ENCODE measurements at regions of chr19 and their contacts with region 1.

Region 1: DNA sequence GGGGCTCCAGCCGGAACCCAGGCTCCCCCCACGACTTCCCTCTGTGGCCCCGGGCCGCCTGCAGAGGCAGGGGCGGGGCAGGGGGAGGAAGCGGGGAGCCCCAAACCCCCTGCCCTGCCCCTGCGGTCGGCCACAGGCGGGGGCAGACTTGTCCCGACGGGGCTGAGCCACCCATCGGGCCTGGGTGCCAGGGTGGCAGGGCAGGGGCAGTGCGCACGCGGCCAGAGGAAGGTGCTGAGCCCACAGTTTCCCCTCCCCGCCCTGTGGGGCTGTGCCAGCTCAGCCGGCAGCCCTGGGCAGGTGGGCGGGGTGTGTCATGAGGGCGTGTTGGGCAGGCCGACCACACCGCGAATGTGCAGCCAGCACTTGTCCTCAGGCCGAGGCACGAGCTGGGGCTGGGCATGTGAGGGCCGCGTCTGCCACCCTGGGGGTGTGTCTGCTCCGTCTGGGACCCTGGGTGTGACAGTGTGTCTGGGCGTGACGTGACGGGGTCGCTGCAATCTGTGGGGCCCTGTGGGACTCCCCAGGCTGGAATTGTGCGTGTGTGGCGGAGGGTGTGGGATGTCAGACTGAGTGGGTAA is 17.7 kb downstream of the CCDC97 start:
- DNase-seq: peak; percentile 98
- H3K4me3 ChIP-seq: peak overlapping the region in 7 of 8 donors; percentile 15 to 57 (median 34)
- H3K27ac ChIP-seq: peak overlapping the region; percentile 83 to 94 (median 90)
- H3K4me1 ChIP-seq: peaks cover 57 to 100% (median 90%) of the 10 kb centered on the region in 6 donors
- H3K27me3 ChIP-seq: no peaks in the 10 kb centered on the region
- CTCF ChIP-seq: peak in 4 of 11 experiments; percentile 13 to 35 (median 23)
- POLR2A ChIP-seq: no peak

Region 2: GRCh38 chr19:41351339-41352245 is 23.9 kb after region 1 on chr19:
- intact Hi-C with region 1: loop called (anchors 2 kb)
- DNase-seq: peak; percentile 97
- H3K4me3 ChIP-seq: peak overlapping the region; percentile 76 to 100 (median 98)
- H3K27ac ChIP-seq: peak overlapping the region; percentile 70 to 98 (median 95)
- H3K4me1 ChIP-seq: peaks cover 37 to 88% (median 66%) of the 10 kb centered on the region in 6 donors
- H3K27me3 ChIP-seq: no peaks in the 10 kb centered on the region
- CTCF ChIP-seq: no peak
- POLR2A ChIP-seq: no peak

Measured in spleen (tissue), 13 donors.